ENCODE measurements at regions of chr4 and their contacts with region 1.

Region 1: GRCh38 chr4:99841129-99841528 is 24.5 kb downstream of the DAPP1 start:
- DNase-seq: no peak
- ATAC-seq: no peak
- H3K4me3 ChIP-seq: no peak overlapping the region
- H3K4me3 Mint-ChIP-seq: no peak overlapping the region
- H3K27ac ChIP-seq: no peak overlapping the region
- H3K27ac Mint-ChIP-seq: peak overlapping the region; percentile 18
- H3K4me1 ChIP-seq: peaks cover 10% of the 10 kb centered on the region
- H3K4me1 Mint-ChIP-seq: peaks cover 16% of the 10 kb centered on the region
- H3K27me3 ChIP-seq: no peaks in the 10 kb centered on the region
- H3K27me3 Mint-ChIP-seq: no peaks in the 10 kb centered on the region
- CTCF ChIP-seq: no peak

Region 2: GRCh38 chr4:99885063-99885664 is 44.0 kb after region 1 on chr4:
- CTCF ChIA-PET with region 1: no interaction called
- POLR2A ChIA-PET with region 1: no interaction called
- intact Hi-C with region 1: loop called (anchors 5 kb)
- DNase-seq: peak in 7 of 14 experiments; percentile 10 to 76 (median 30)
- ATAC-seq: peak; percentile 68
- H3K4me3 ChIP-seq: no peak overlapping the region
- H3K4me3 Mint-ChIP-seq: no peak overlapping the region
- H3K27ac ChIP-seq: no peak overlapping the region
- H3K27ac Mint-ChIP-seq: no peak overlapping the region
- H3K4me1 ChIP-seq: no peaks in the 10 kb centered on the region
- H3K4me1 Mint-ChIP-seq: peaks cover 17% of the 10 kb centered on the region
- H3K27me3 ChIP-seq: no peaks in the 10 kb centered on the region
- H3K27me3 Mint-ChIP-seq: no peaks in the 10 kb centered on the region
- CTCF ChIP-seq: peak; percentile 61

Measured in CD4-positive, alpha-beta T cell (primary cell).